Transverse colon (tissue), 4 donors: ENCODE measurements at regions of chr3 and their contacts with region 1.

Region 1: DNA sequence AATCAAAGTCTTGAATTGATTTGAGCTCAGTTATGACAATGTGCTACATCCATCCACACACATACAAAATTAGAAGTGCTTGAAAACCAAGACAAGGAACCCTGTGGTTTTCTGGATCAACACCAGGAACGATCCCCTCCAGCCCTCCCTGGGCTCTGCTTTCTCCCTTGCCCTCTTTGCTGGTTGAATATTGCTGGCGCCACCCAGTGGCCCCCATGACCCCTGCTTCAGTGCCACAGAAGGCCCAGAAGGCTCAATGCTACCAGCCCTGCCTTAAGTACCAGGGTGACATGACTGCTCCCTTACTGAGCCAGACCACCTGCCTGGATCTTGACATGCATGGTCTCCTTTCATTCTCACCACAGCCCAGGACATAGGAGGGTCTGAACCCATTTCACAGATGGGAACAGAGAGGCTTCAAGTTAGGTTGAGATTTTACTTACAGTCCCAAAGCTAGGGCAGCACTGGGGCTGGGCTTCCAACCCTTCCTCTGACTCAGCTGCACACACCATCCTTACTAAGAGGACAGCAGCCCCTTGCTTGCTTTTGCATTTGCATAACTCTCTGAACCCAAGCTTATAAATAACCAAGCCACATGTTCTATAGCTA is 15.0 kb downstream of the IL12A start:
- DNase-seq: peak; percentile 71
- H3K4me3 ChIP-seq: no peak overlapping the region
- H3K27ac ChIP-seq: no peak overlapping the region
- H3K4me1 ChIP-seq: no peaks in the 10 kb centered on the region
- H3K27me3 ChIP-seq: no peaks in the 10 kb centered on the region
- CTCF ChIP-seq: peak; percentile 48 to 57 (median 54)
- EP300 ChIP-seq: no peak
- POLR2A ChIP-seq: no peak

Region 2: DNA sequence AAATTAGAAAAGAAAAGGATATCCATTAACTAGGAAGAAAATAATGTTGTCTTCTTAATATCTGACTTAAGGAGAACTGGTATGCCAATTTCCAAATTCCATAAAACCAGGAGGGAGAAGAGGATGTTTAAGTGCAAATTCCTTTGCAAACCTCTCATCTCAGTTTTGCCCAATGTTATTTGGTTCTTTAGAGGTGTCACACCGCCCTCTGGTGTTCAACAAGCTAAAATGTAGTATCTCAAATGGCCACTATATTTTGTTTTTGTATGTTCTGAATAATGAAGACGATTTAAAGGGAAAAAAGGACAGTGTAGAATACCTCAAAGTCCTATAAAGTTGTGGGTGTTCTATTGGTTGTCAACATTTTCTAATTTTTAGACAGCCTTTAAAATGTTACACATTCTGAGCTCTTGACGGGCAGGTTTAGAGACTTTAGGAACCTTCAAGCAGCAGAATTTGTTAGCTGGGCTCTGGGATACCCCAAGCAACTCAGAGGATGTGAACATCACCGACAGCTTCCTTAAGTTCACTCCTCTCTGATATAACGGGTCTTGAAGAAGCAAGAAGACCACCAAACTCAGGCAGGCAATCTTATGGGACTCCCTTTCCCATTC is 743.5 kb before region 1 on chr3:
- in situ Hi-C with region 1: loop called in 2 of 4 experiments (anchors 25 kb)
- intact Hi-C with region 1: loop called (anchors 10 kb)
- DNase-seq: peak; percentile 25
- H3K4me3 ChIP-seq: no peak overlapping the region
- H3K27ac ChIP-seq: no peak overlapping the region
- H3K4me1 ChIP-seq: no peaks in the 10 kb centered on the region
- H3K27me3 ChIP-seq: no peaks in the 10 kb centered on the region
- CTCF ChIP-seq: peak; percentile 66 to 76 (median 70)
- EP300 ChIP-seq: no peak
- POLR2A ChIP-seq: no peak

Region 3: GRCh38 chr3:159616212-159616825 is 387.3 kb before region 1 on chr3:
- in situ Hi-C with region 1: loop called in 1 of 4 experiments (anchors 25 kb)
- intact Hi-C with region 1: no loop called
- DNase-seq: peak; percentile 55
- H3K4me3 ChIP-seq: no peak overlapping the region
- H3K27ac ChIP-seq: no peak overlapping the region
- H3K4me1 ChIP-seq: peaks cover 0 to 7% (median 3%) of the 10 kb centered on the region in 4 donors
- H3K27me3 ChIP-seq: no peaks in the 10 kb centered on the region
- CTCF ChIP-seq: peak; percentile 51 to 80 (median 61)
- EP300 ChIP-seq: no peak
- POLR2A ChIP-seq: no peak

Region 4: GRCh38 chr3:159828542-159828943 is 175.1 kb before region 1 on chr3:
- in situ Hi-C with region 1: loop called in 1 of 4 experiments (anchors 10 kb)
- intact Hi-C with region 1: loop called (anchors 5 kb)
- DNase-seq: no peak
- H3K4me3 ChIP-seq: no peak overlapping the region
- H3K27ac ChIP-seq: peak overlapping the region; percentile 13 to 65 (median 56)
- H3K4me1 ChIP-seq: peaks cover 0 to 62% (median 41%) of the 10 kb centered on the region in 4 donors
- H3K27me3 ChIP-seq: no peaks in the 10 kb centered on the region
- CTCF ChIP-seq: peak; percentile 49 to 56 (median 53)
- EP300 ChIP-seq: no peak
- POLR2A ChIP-seq: no peak

Region 5: DNA sequence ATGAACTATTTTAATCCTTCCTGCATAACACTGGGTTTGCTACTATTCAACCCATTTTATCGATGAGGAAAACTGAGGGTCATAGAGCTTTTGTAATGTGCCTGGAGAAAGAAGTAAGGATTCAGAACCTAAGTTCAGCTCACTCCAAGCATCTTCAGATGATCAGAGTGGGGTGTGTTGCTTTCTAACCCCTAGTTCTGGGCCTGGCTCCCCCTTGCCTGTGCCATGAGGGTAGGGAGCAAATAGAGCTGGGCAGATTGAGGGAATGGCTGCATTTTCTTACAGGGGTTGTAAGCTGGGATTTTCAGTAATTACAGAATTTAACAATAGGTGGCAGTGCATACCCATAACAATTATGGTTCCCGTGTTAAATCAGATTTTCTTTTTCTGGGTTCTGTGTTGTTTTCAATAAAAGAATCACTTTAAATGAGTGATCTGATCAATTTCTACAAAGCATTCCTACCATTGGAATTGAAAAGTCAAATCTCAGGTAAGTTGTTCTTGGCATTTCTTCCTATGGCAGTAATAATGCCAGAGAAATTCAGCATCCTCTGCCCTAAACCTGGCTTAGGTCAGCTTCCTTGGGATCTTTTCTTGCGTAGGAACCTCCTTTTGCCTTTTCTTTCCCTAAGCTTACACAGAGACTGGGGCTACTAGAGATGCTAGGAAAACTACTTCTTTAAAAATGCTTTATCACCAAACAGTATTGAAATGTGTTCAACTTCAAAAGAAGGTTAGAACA is 118.8 kb before region 1 on chr3:
- in situ Hi-C with region 1: loop called in 2 of 4 experiments (anchors 5 kb)
- intact Hi-C with region 1: loop called (anchors 5 kb)
- DNase-seq: no peak
- H3K4me3 ChIP-seq: no peak overlapping the region
- H3K27ac ChIP-seq: peak overlapping the region in 1 of 4 donors; percentile 18
- H3K4me1 ChIP-seq: peaks cover 0 to 18% (median 7%) of the 10 kb centered on the region in 4 donors
- H3K27me3 ChIP-seq: no peaks in the 10 kb centered on the region
- CTCF ChIP-seq: peak; percentile 49 to 64 (median 63)
- EP300 ChIP-seq: no peak
- POLR2A ChIP-seq: no peak

Region 6: DNA sequence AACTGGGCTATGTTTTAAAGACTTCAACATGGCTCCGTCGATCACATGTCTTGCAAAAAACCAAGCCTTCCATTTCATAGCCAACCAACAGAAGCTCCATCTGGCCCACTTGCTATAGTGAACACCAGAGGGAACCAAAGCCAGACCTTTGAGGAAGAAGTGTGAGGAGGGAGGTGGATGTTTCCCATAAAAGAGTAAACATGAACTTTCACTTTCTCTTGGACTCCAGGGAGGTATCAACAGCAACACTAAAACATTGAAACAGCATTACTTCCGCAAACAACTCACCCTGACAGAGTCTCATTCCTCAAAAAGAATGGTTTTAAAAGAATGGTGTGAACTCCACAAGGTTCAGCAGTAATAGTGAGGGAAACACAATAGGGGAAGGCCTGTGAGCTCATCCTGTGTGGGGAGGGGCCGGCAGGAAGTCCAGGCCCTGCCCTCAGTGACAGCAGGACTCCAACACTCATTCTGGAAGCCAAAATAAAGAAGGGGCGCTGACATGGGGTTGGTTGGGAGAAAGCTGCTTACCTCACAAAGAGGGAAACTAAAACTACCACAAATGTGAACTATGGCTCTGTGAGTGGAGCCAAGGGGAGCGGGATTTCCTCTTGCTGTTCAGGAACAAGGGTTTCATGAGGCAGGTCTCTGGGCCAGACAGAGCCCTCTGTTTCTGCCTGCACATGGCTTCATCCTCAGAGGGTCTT is 74.0 kb before region 1 on chr3:
- in situ Hi-C with region 1: loop called in 1 of 4 experiments (anchors 10 kb)
- intact Hi-C with region 1: no loop called
- DNase-seq: peak; percentile 15
- H3K4me3 ChIP-seq: no peak overlapping the region
- H3K27ac ChIP-seq: peak overlapping the region; percentile 0 to 56 (median 41)
- H3K4me1 ChIP-seq: peaks cover 0 to 21% (median 3%) of the 10 kb centered on the region in 4 donors
- H3K27me3 ChIP-seq: no peaks in the 10 kb centered on the region
- CTCF ChIP-seq: peak in 4 of 5 experiments; percentile 36 to 72 (median 56)
- EP300 ChIP-seq: no peak
- POLR2A ChIP-seq: no peak